Calu3 (cell line): ENCODE measurements at regions of chr1 and their contacts with region 1.

Region 1: GRCh38 chr1:237760951-237761350 is 129.8 kb downstream of the ZP4 start:
- DNase-seq: peak; percentile 35
- H3K4me3 Mint-ChIP-seq: no peak overlapping the region
- H3K27ac Mint-ChIP-seq: peak overlapping the region; percentile 88
- H3K4me1 Mint-ChIP-seq: peaks cover 46% of the 10 kb centered on the region
- H3K27me3 Mint-ChIP-seq: no peaks in the 10 kb centered on the region
- CTCF ChIP-seq: no peak

Region 2: DNA sequence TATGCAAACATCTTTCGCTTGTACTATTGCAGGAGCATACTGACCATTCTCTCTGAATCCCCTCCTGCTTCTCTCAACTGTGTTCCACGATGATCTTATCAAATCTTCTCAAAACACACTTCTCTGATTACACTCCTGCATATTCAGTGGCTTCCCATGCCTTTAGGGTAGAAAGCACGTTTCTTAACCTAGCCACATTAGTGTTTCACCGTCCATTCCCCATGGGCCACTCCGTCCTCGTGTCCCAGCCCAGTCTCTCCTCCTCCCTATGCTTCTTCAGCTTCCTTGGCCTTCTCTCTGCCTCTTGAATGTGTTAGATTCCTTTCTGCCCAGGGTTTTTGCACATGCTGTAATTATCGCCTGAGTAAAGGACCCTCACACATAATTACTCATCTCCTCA is 68.6 kb before region 1 on chr1:
- CTCF ChIA-PET with region 1: no interaction called
- intact Hi-C with region 1: no loop called
- DNase-seq: no peak
- H3K4me3 Mint-ChIP-seq: no peak overlapping the region
- H3K27ac Mint-ChIP-seq: no peak overlapping the region
- H3K4me1 Mint-ChIP-seq: peaks cover 4% of the 10 kb centered on the region
- H3K27me3 Mint-ChIP-seq: no peaks in the 10 kb centered on the region
- CTCF ChIP-seq: no peak

Region 3: DNA sequence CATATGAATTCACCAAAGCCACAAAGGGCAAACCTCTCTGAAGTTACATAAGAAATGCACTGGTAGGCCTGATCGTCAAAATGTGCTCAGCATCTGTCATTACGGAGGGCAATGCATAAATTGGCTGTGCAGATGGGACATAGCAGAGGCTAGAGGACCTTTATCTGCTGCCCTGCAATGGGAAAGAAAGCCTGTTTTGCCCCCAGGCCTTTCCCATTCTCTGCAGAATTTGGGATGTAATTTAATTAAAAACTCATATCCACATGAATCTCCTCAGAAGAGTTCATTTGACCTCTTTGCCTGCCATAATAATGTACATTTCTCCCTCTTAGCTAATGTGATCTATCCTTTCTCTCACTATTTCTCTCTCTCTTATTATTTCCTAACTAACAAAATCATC is 28.3 kb before region 1 on chr1:
- CTCF ChIA-PET with region 1: no interaction called
- intact Hi-C with region 1: no loop called
- DNase-seq: no peak
- H3K4me3 Mint-ChIP-seq: no peak overlapping the region
- H3K27ac Mint-ChIP-seq: no peak overlapping the region
- H3K4me1 Mint-ChIP-seq: peaks cover 11% of the 10 kb centered on the region
- H3K27me3 Mint-ChIP-seq: no peaks in the 10 kb centered on the region
- CTCF ChIP-seq: no peak

Region 4: DNA sequence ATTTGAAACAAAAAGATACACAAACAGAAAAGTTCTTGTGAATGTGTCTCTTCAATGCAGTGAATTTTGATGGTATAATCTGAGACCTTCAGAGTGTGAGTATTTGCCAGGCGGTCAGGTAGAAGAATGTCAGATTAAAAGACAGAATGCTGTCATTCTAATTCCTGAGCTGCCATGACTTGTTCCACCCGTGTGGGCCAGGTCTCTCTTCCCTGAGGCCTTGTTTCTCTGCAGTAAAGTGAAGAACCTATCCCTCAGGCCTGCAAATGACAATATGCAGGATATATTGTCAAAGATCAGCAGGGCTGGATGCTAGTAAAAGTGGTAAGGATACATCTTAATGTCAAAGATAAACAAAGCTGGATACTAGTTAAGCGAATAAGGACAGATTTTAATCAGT is 18.4 kb after region 1 on chr1:
- CTCF ChIA-PET with region 1: no interaction called
- intact Hi-C with region 1: loop called (anchors 2 kb)
- DNase-seq: no peak
- H3K4me3 Mint-ChIP-seq: no peak overlapping the region
- H3K27ac Mint-ChIP-seq: no peak overlapping the region
- H3K4me1 Mint-ChIP-seq: no peaks in the 10 kb centered on the region
- H3K27me3 Mint-ChIP-seq: no peaks in the 10 kb centered on the region
- CTCF ChIP-seq: no peak

Region 5: GRCh38 chr1:237811633-237812032 is 50.7 kb after region 1 on chr1:
- CTCF ChIA-PET with region 1: no interaction called
- intact Hi-C with region 1: no loop called
- DNase-seq: no peak
- H3K4me3 Mint-ChIP-seq: no peak overlapping the region
- H3K27ac Mint-ChIP-seq: no peak overlapping the region
- H3K4me1 Mint-ChIP-seq: no peaks in the 10 kb centered on the region
- H3K27me3 Mint-ChIP-seq: no peaks in the 10 kb centered on the region
- CTCF ChIP-seq: no peak